Calu3 (cell line): ENCODE measurements at regions of chr11 and their contacts with region 1.

Region 1: GRCh38 chr11:112121981-112122615 is 35.4 kb downstream of the SDHD start:
- DNase-seq: no peak
- H3K4me3 Mint-ChIP-seq: no peak overlapping the region
- H3K27ac Mint-ChIP-seq: no peak overlapping the region
- H3K4me1 Mint-ChIP-seq: peaks cover 10% of the 10 kb centered on the region
- H3K27me3 Mint-ChIP-seq: no peaks in the 10 kb centered on the region
- CTCF ChIP-seq: no peak

Region 2: DNA sequence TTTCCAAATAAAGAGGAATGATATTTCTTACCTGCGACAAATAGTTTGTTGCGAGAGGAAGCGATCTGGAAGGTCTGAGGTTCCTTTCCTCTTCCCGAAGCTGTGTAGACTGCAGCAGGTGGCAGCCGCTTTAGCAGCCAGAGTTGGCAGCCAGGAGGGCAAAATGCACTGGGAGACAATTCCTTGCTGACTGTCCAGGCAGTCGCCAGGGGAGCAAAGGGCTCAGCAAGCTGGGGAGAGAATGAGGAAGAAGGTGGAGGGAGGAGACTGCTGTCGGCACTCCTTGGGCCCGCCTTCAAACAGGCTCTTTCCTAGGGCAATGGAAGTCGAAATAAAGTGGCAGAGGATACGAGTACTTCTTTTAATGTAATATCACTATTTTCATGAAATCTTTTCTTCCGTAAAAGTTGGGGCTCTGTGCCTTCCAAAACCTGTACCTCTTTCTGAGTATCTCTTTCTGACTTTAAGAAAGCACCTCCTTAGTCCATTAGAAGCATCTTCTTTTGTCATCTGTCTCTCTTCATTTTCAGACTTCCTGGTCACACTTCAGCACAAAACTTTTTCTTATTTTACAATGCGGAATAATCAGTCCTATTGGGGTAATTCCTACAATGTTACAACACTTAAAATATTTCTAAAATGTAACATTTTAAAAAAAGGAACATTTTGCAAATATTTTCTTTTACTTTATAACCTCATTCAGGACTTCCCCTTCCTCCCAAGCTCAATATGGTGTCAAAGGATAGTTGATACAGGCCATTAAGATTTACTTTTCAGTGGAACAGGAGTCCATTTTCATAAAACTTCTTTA is 42.0 kb after region 1 on chr11 and contains the start of gene IL18:
- CTCF ChIA-PET with region 1: no interaction called
- intact Hi-C with region 1: loop called (anchors 5 kb)
- DNase-seq: peak; percentile 84
- H3K4me3 Mint-ChIP-seq: peak within 1 kb of the TSS; percentile 75
- H3K27ac Mint-ChIP-seq: peak within 1 kb of the TSS; percentile 82
- H3K4me1 Mint-ChIP-seq: peaks cover 43% of the 10 kb centered on the region
- H3K27me3 Mint-ChIP-seq: no peaks in the 10 kb centered on the region
- CTCF ChIP-seq: no peak
- total RNA-seq, gene IL18: 111 and 121 TPM in 2 replicates